ENCODE measurements at regions of chr6 and their contacts with region 1.

Region 1: GRCh38 chr6:78010130-78010529 is 357.3 kb downstream of the MEI4 start:
- DNase-seq: no peak
- H3K4me3 ChIP-seq: no peak overlapping the region
- H3K27ac ChIP-seq: no peak overlapping the region
- H3K4me1 ChIP-seq: no peaks in the 10 kb centered on the region
- H3K27me3 ChIP-seq: no peaks in the 10 kb centered on the region
- CTCF ChIP-seq: no peak
- EP300 ChIP-seq: no peak
- POLR2A ChIP-seq: no peak

Region 2: GRCh38 chr6:77548190-77548589 is 461.9 kb before region 1 on chr6:
- intact Hi-C with region 1: loop called (anchors 10 kb)
- DNase-seq: no peak
- H3K4me3 ChIP-seq: no peak overlapping the region
- H3K27ac ChIP-seq: no peak overlapping the region
- H3K4me1 ChIP-seq: no peaks in the 10 kb centered on the region
- H3K27me3 ChIP-seq: no peaks in the 10 kb centered on the region
- CTCF ChIP-seq: no peak
- EP300 ChIP-seq: no peak
- POLR2A ChIP-seq: no peak

Region 3: GRCh38 chr6:77965449-77965848 is 44.7 kb before region 1 on chr6:
- intact Hi-C with region 1: no loop called
- DNase-seq: no peak
- H3K4me3 ChIP-seq: no peak overlapping the region
- H3K27ac ChIP-seq: no peak overlapping the region
- H3K4me1 ChIP-seq: no peaks in the 10 kb centered on the region
- H3K27me3 ChIP-seq: no peaks in the 10 kb centered on the region
- CTCF ChIP-seq: no peak
- EP300 ChIP-seq: no peak
- POLR2A ChIP-seq: no peak

Region 4: DNA sequence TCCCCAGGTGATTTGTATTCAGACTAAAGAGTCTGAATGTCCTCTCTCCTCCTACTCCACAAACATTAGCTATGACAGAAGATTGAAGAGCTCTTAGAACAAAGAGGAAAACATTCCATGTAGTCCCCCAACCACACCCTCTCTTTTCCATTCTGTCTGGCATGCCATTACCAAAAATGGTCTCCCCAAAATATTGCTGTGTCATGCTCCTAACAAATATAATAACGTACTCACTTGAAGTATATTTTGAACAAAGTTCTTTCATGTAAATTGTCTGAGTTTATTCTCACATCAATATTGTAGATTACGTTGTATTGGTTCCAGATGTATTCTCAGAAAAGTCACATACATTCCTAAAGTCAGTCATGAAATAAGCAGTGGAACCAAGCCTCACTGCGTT is 389.9 kb after region 1 on chr6:
- intact Hi-C with region 1: no loop called
- DNase-seq: no peak
- H3K4me3 ChIP-seq: no peak overlapping the region
- H3K27ac ChIP-seq: no peak overlapping the region
- H3K4me1 ChIP-seq: no peaks in the 10 kb centered on the region
- H3K27me3 ChIP-seq: no peaks in the 10 kb centered on the region
- CTCF ChIP-seq: no peak
- EP300 ChIP-seq: no peak
- POLR2A ChIP-seq: no peak

Measured in sigmoid colon (tissue), 7 donors.